Activated CD4-positive, alpha-beta memory T cell treated with anti-CD3 and anti-CD28 coated beads for 36 hours (primary cell): ENCODE measurements at regions of chr3 and their contacts with region 1.

Region 1: GRCh38 chr3:52123106-52123725 is 31.0 kb downstream of the POC1A start:
- DNase-seq: peak; percentile 78
- H3K4me3 Mint-ChIP-seq: no peak overlapping the region
- H3K27ac Mint-ChIP-seq: no peak overlapping the region
- H3K4me1 Mint-ChIP-seq: peaks cover 4% of the 10 kb centered on the region
- H3K27me3 Mint-ChIP-seq: no peaks in the 10 kb centered on the region

Region 2: GRCh38 chr3:52099001-52099401 is 24.2 kb before region 1 on chr3:
- CTCF ChIA-PET with region 1: interaction called, 14 read pairs
- POLR2A ChIA-PET with region 1: no interaction called
- intact Hi-C with region 1: no loop called
- DNase-seq: no peak
- H3K4me3 Mint-ChIP-seq: no peak overlapping the region
- H3K27ac Mint-ChIP-seq: no peak overlapping the region
- H3K4me1 Mint-ChIP-seq: no peaks in the 10 kb centered on the region
- H3K27me3 Mint-ChIP-seq: no peaks in the 10 kb centered on the region

Region 3: GRCh38 chr3:52270252-52270754 is 147.1 kb after region 1 on chr3:
- CTCF ChIA-PET with region 1: no interaction called
- POLR2A ChIA-PET with region 1: no interaction called
- intact Hi-C with region 1: no loop called
- DNase-seq: peak; percentile 31
- H3K4me3 Mint-ChIP-seq: peak overlapping the region; percentile 77
- H3K27ac Mint-ChIP-seq: peak overlapping the region; percentile 91
- H3K4me1 Mint-ChIP-seq: peaks cover 85% of the 10 kb centered on the region
- H3K27me3 Mint-ChIP-seq: no peaks in the 10 kb centered on the region